Heart right ventricle (tissue), 16 donors: ENCODE measurements at regions of chr11 and their contacts with region 1.

Region 1: GRCh38 chr11:109015283-109015682 is 350.4 kb downstream of the DDX10 start:
- DNase-seq: no peak
- ATAC-seq: no peak
- H3K4me3 ChIP-seq: no peak overlapping the region
- H3K27ac ChIP-seq: no peak overlapping the region
- H3K4me1 ChIP-seq: no peaks in the 10 kb centered on the region
- H3K27me3 ChIP-seq: no peaks in the 10 kb centered on the region
- CTCF ChIP-seq: no peak

Region 2: DNA sequence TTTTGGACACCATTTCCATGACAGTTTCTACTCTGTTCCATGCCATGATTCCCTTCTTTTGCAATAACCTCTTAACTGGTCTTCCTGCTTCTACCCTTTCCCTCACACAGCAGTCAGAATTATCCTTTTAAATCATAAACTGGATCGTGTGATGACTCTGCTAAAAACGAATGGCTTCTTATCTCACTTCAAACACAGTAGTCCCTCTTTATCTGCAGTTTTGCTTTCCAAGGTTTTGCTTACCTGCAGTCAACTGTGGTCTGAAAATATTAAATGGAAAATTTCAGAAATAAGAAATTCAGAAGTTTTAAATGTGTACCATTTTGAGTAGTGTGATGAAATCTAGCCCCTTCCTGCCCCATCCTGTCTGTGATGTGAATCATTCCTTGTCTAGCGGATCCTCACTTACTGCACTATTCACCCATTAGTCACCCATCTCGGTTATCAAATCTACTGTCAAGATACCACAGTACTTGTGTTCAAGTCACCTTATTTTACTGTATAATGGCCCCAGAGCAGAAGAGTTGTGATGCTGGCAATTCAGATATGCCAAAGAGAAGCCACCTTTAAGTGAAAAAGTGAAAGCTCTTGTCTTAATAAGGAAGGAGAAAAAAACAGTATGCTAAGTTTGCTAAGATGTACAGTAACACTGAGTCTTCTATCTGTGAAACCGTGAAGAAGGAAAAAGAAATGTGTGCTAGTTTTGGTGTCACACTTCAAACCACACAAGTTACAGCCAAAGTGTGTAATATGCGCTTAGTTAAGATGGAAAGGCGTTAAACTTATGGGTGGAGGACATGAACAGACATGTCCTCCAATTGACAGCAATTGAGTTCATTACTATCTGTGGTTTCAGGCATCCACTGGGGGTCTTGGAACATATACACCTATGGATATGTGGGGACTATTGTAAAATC is 67.4 kb before region 1 on chr11:
- intact Hi-C with region 1: loop called in 1 of 10 experiments (anchors 10 kb)
- DNase-seq: no peak
- ATAC-seq: no peak
- H3K4me3 ChIP-seq: no peak overlapping the region
- H3K27ac ChIP-seq: no peak overlapping the region
- H3K4me1 ChIP-seq: no peaks in the 10 kb centered on the region
- H3K27me3 ChIP-seq: no peaks in the 10 kb centered on the region
- CTCF ChIP-seq: no peak

Region 3: GRCh38 chr11:109000531-109000930 is 14.8 kb before region 1 on chr11:
- intact Hi-C with region 1: loop called in 1 of 10 experiments (anchors 1 kb)
- DNase-seq: no peak
- ATAC-seq: no peak
- H3K4me3 ChIP-seq: no peak overlapping the region
- H3K27ac ChIP-seq: no peak overlapping the region
- H3K4me1 ChIP-seq: no peaks in the 10 kb centered on the region
- H3K27me3 ChIP-seq: no peaks in the 10 kb centered on the region
- CTCF ChIP-seq: no peak